Panc1 (cell line): ENCODE measurements at regions of chr21 and their contacts with region 1.

Region 1: GRCh38 chr21:33199516-33200217 is 30.1 kb upstream of the IFNAR2 start:
- DNase-seq: peak; percentile 61
- ATAC-seq: peak; percentile 86
- H3K4me3 ChIP-seq: no peak overlapping the region
- H3K27ac ChIP-seq: no peak overlapping the region
- H3K4me1 ChIP-seq: peaks cover 5% of the 10 kb centered on the region; the same call in 1 of the 2 replicates
- H3K27me3 ChIP-seq: no peaks in the 10 kb centered on the region
- CTCF ChIP-seq: peak; percentile 74

Region 2: DNA sequence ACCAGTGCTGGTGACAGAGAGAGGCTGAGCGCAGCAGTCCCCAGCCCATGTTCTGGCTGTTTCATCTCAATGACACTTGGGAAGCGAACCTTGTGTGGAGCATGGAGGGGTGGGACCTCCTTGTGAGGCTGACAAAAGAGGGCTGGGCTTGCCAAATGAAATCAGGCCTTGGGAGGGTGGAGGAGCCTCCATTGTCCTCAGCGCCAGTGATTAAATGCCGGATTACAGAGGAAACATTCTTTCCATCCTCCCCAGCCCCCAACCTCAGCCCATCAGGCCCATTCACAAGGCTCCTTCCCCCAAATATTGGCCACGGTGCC is 364.8 kb before region 1 on chr21:
- CTCF ChIA-PET with region 1: interaction called, 3 read pairs
- POLR2A ChIA-PET with region 1: no interaction called
- in situ Hi-C with region 1: no loop called
- intact Hi-C with region 1: loop called (anchors 5 kb)
- DNase-seq: no peak
- ATAC-seq: no peak
- H3K4me3 ChIP-seq: no peak overlapping the region
- H3K27ac ChIP-seq: no peak overlapping the region
- H3K4me1 ChIP-seq: no peaks in the 10 kb centered on the region
- H3K27me3 ChIP-seq: no peaks in the 10 kb centered on the region; the same call in 1 of the 2 replicates
- CTCF ChIP-seq: no peak

Region 3: GRCh38 chr21:33286600-33287456 is 87.2 kb after region 1 on chr21:
- CTCF ChIA-PET with region 1: no interaction called
- POLR2A ChIA-PET with region 1: no interaction called
- in situ Hi-C with region 1: no loop called
- intact Hi-C with region 1: no loop called
- DNase-seq: no peak
- ATAC-seq: no peak
- H3K4me3 ChIP-seq: no peak overlapping the region
- H3K27ac ChIP-seq: no peak overlapping the region
- H3K4me1 ChIP-seq: no peaks in the 10 kb centered on the region
- H3K27me3 ChIP-seq: no peaks in the 10 kb centered on the region
- CTCF ChIP-seq: no peak

Region 4: DNA sequence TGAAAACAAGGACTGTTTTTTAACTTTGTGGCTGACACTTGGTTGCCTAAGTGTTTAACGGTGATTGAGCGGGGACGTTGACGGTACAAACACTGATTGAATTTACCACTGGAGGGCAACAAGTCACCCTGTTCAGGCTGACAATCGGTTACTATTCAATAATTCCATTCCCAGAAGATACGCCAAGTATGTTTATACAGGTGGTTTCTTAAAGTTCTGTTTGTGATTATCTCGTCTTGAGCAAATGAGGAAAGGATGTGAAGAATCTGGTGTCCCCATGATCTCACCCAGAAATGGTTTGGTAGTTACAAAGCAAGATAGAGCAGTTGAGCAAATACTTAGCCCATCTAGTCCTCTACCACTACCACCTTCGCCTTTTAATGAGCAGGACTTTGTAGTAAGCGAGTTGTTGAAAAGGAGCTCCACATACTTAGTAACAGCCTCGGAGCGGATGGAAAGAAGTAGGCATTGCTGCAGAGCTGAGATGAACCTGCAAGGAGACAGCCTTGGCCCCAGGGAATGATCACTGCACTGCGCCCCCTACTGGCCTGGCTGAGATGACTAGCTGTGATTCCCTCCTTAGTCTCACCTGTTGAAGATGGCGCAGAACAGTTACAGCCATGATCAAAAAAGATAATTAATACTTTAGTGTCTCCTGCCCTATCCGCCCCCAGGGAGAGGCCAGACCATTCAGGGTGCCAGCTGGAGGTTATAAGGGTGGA is 161.4 kb after region 1 on chr21:
- CTCF ChIA-PET with region 1: interaction called, 7 read pairs
- POLR2A ChIA-PET with region 1: no interaction called
- in situ Hi-C with region 1: no loop called
- intact Hi-C with region 1: loop called (anchors 5 kb)
- DNase-seq: peak; percentile 67
- ATAC-seq: peak; percentile 98
- H3K4me3 ChIP-seq: peak overlapping the region; percentile 19 to 46
- H3K27ac ChIP-seq: no peak overlapping the region
- H3K4me1 ChIP-seq: no peaks in the 10 kb centered on the region
- H3K27me3 ChIP-seq: no peaks in the 10 kb centered on the region
- CTCF ChIP-seq: peak; percentile 88

Region 5: DNA sequence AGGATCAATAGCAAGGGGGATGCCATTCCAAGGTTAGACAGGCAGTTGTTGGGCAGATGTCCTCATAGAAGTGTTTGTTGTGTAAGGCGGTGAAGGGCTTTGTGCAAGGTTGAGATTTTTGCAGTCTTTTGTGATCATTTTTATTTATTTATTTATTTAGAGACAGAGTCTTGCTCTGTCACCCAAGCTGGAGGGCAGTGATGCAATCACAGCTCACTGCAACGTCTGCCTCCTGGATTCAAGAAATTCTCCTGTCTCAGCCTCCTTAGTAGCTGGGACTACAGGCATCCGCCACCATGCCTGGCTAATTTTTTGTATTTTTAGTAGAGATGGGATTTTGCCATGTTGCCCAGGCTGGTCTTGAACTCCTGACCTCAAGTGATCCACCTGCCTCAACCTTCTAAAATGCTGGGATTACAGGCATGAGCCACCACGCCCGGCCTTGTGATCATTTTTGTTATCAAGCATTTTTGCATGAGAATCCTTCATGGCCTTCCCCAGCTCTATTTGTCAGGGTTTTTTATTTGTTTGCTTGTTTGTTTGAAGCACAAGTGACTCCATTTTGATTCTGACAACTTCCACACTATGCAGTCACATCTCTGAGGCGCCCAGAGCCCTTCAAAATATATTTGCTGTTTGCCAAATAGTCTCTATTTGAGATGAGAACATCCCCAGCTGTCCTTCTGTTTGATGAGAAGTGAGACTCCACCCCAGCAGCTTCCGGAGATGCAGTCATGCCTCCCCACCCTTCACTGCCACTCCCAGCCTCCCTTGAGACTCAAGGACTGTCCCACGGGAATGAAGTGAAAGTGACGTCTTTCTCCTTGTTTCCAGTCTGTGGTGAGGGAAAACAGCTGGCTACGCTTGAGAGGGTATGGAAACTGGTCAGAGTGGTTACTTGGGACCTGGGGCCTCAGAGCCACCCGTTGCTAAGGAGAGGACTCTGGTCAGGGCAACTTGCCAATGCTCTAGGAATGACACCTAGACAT is 242.1 kb after region 1 on chr21:
- CTCF ChIA-PET with region 1: interaction called, 20 read pairs
- POLR2A ChIA-PET with region 1: interaction called, 11 read pairs
- in situ Hi-C with region 1: no loop called
- intact Hi-C with region 1: loop called (anchors 5 kb)
- DNase-seq: no peak
- ATAC-seq: no peak
- H3K4me3 ChIP-seq: no peak overlapping the region
- H3K27ac ChIP-seq: no peak overlapping the region
- H3K4me1 ChIP-seq: no peaks in the 10 kb centered on the region
- H3K27me3 ChIP-seq: no peaks in the 10 kb centered on the region
- CTCF ChIP-seq: no peak

Region 6: DNA sequence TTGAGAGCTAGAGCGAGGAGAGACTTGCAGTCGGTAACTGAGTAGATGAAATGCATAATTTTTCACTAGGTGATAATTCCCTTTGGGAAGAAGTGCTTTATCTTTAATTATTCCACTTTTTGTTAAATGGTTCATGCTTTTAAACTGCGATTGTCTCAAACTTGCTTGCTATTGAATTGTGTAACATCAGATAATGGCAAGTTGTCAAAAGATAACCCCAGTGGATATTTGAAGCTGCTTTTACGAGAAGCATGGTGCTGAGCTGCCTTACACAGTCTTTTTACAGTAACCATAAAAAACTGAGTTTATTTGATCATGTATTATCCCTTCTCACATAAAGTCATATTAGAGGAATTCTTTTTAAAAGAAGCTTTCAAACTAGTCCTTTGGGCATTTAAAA is 249.9 kb after region 1 on chr21:
- CTCF ChIA-PET with region 1: interaction called, 20 read pairs
- POLR2A ChIA-PET with region 1: interaction called, 11 read pairs
- in situ Hi-C with region 1: no loop called
- intact Hi-C with region 1: loop called (anchors 5 kb)
- DNase-seq: no peak
- ATAC-seq: no peak
- H3K4me3 ChIP-seq: no peak overlapping the region
- H3K27ac ChIP-seq: no peak overlapping the region
- H3K4me1 ChIP-seq: no peaks in the 10 kb centered on the region
- H3K27me3 ChIP-seq: no peaks in the 10 kb centered on the region
- CTCF ChIP-seq: no peak